MCF 10A (cell line): ENCODE measurements at regions of chr2 and their contacts with region 1.

Region 1: GRCh38 chr2:159982270-159982669 is 80.1 kb downstream of the PLA2R1 start:
- DNase-seq: peak; percentile 93
- H3K4me3 Mint-ChIP-seq: no peak overlapping the region
- H3K27ac Mint-ChIP-seq: peak overlapping the region; percentile 64
- H3K4me1 Mint-ChIP-seq: peaks cover 12% of the 10 kb centered on the region
- H3K27me3 Mint-ChIP-seq: no peaks in the 10 kb centered on the region
- CTCF ChIP-seq: no peak

Region 2: GRCh38 chr2:159998961-159999360 is 16.7 kb after region 1 on chr2:
- CTCF ChIA-PET with region 1: interaction called, 8 read pairs
- POLR2A ChIA-PET with region 1: interaction called, 28 read pairs
- intact Hi-C with region 1: no loop called
- DNase-seq: peak; percentile 36
- H3K4me3 Mint-ChIP-seq: no peak overlapping the region
- H3K27ac Mint-ChIP-seq: peak overlapping the region; percentile 76
- H3K4me1 Mint-ChIP-seq: peaks cover 19% of the 10 kb centered on the region
- H3K27me3 Mint-ChIP-seq: no peaks in the 10 kb centered on the region
- CTCF ChIP-seq: peak; percentile 24

Region 3: GRCh38 chr2:160269803-160270570 is 287.7 kb after region 1 on chr2:
- CTCF ChIA-PET with region 1: no interaction called
- POLR2A ChIA-PET with region 1: no interaction called
- intact Hi-C with region 1: no loop called
- DNase-seq: no peak
- H3K4me3 Mint-ChIP-seq: no peak overlapping the region
- H3K27ac Mint-ChIP-seq: no peak overlapping the region
- H3K4me1 Mint-ChIP-seq: no peaks in the 10 kb centered on the region
- H3K27me3 Mint-ChIP-seq: no peaks in the 10 kb centered on the region
- CTCF ChIP-seq: no peak